Left ventricle myocardium inferior (tissue), 1 donor: ENCODE measurements at regions of chr19 and their contacts with region 1.

Region 1: DNA sequence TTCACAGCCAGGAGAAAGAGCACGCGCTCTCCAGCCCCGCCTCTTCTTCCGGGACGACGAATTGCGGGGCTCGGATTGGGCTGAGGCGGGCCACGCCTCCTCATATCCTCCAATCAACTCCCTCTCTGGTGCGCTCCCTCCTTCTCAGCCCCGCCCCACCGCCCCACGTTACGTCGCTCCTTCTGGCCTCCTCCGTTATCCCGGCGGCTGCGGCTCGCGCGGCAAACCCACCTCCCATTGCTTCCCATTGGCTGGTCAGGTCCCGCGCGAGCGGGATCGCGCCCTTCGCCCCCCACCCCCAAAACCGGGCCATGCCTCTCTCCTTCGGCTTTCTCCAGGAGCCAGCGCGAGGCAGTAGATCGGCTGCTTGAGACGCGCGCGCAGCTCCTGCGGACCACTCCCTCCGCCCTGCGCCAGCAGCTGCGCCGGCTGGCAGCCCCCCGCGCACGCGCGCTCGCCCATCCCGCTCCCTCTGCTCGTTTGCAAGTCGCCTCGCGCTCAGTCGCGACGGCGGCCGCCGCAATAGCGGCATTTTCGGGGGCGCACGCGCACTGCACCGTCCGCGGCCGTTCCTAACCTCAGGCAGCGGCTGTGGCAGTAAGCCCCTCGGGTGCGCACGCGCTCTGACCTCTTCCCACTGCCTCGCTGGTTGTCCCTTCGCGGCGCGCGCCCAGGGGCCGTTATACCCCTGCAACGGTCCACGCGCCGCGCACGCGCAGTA is 512 bp upstream of the ARHGAP35 start:
- DNase-seq: peak; percentile 99
- H3K4me3 ChIP-seq: peak overlapping the region; percentile 79
- H3K27ac ChIP-seq: peak overlapping the region; percentile 98
- H3K4me1 ChIP-seq: peaks cover 72% of the 10 kb centered on the region
- H3K27me3 ChIP-seq: no peaks in the 10 kb centered on the region
- CTCF ChIP-seq: peak; percentile 15

Region 2: DNA sequence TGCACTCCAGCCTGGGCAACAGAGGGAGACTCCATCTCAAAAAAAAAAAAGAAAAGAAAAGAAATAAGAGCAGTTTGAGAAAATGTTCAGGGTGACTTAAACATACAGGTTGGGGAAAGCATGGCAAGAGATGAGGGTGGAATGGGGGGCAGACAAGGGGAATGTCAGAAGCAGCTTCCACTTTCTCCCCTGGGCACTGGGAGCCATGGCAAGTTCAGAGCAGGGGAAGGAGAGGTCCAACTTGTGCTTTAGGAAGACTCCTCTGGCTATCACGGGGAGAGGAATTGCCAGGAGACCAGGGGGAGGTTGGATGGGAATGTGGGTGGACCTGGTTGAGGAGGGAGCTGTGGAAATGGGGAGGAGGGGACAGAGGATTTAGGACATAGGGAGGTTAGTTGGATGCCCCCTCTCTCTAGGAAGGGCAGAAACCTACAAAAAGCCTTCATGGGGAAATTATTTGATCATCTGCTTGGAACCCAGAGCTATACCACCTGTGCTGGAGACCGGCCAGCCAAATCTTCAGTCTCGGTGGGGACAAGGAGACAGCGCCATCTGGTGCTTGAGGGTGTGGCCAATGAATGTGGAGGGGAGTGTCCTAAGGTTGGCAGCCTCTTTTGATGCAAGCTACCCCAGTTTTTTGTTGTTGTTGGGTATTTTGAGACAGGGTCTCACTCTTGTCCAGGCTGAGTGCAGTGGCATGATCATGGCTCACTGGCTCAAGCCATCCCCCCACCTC is 106.7 kb before region 1 on chr19:
- intact Hi-C with region 1: no loop called
- DNase-seq: peak; percentile 41
- H3K4me3 ChIP-seq: no peak overlapping the region
- H3K27ac ChIP-seq: no peak overlapping the region
- H3K4me1 ChIP-seq: peaks cover 9% of the 10 kb centered on the region
- H3K27me3 ChIP-seq: no peaks in the 10 kb centered on the region
- CTCF ChIP-seq: peak; percentile 63

Region 3: DNA sequence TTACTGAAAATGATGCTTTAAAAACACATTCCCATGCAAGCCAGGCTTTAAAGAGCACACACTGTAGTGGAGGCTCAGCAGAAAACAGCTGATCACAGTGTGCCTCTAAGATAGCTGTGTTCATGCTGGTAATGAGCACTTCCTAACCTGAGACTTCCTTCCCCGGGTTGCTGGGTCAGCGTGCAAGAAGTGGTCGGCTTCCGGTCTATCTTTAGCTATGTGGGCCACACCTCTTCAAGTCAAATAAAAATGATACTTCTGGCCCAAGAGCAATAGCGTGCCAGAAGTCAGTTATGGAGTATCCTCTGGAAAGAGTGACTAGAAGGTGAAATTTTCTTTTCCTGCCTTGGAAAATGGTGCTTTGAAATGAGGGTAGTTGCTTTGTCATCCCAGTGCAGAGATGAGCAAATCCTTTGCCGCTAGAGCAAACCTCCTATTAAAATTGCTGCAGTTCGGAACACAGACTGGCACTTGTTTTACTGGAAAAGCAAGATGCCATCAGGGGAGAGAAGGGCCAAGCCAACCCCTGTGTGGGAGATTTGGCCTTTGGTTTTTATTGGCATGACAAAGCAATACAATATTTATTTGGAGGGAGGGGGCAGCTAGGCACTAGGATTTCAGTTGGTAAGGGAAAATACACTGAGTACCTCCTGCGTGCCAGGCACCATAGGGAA is 64.7 kb after region 1 on chr19:
- intact Hi-C with region 1: loop called (anchors 10 kb)
- DNase-seq: no peak
- H3K4me3 ChIP-seq: peak overlapping the region; percentile 2
- H3K27ac ChIP-seq: peak overlapping the region; percentile 73
- H3K4me1 ChIP-seq: peaks cover 66% of the 10 kb centered on the region
- H3K27me3 ChIP-seq: no peaks in the 10 kb centered on the region
- CTCF ChIP-seq: no peak

Region 4: DNA sequence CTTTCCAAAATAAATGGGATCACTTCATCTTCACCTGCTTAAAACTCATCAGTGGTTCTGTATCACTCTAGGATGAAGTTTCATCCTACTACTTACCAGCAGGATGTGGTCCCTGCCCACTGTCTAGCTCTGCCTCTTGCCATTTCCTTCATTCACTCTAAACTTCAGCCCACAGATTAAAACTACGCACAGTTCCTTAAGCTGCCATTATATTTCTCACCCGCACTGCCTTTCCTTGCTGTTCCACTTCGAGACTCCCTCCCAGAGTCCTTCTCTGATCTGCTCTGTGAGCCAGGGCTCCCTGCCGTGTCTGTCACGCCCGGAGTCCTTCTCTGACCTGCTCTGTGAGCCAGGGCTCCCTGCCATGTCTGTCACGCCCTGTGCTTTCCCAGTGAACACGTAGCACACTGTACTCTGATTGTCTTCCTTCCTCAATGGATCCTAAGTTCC is 107.3 kb after region 1 on chr19:
- intact Hi-C with region 1: no loop called
- DNase-seq: peak; percentile 88
- H3K4me3 ChIP-seq: peak overlapping the region; percentile 19
- H3K27ac ChIP-seq: peak overlapping the region; percentile 91
- H3K4me1 ChIP-seq: peaks cover 75% of the 10 kb centered on the region
- H3K27me3 ChIP-seq: no peaks in the 10 kb centered on the region
- CTCF ChIP-seq: no peak

Region 5: DNA sequence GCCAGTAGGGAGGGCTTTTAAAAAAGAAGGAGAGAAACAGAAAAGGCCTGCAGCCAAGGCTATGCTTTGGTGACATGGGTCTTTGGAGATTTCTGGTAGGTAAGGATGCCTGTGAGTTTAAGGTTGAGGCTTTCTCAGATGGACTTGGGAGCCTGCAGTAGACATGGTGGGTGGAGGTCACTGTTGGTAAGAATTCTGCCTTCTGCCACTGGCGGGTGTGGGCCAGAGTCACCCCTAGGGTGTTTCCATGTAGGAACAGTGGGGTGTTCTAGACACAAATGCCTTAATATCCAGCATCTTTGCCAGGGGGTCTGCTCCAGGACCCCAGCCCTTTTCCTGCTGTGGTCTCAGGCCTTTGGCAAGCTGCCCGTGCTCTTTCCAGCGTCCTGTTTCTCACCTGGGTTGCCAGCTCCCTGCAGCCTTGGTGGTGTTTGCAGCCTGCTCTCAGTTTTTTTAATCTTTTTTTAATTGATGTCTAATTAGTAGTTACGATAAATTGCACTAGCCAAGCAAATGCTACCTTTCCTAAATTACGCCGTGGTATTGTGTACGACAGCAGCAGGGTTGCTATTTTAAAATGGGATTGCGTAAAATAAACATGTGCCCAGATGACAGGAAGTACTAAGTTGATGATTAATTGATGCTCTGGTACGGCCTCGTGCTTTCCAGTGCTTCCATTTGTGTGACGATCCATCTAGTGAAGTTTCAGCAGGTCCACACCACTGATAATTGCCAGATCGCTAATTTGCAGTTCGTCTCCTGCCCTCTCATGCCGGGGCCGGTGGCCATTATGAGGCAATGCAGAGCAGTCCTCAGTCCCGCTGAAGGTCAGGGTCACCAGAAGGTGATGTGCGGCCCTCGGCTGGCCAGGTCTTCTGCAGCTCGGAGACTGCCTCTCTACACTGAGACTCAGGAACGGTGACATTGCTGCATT is 124.1 kb after region 1 on chr19:
- intact Hi-C with region 1: loop called (anchors 5 kb)
- DNase-seq: peak; percentile 61
- H3K4me3 ChIP-seq: no peak overlapping the region
- H3K27ac ChIP-seq: peak overlapping the region; percentile 91
- H3K4me1 ChIP-seq: peaks cover 88% of the 10 kb centered on the region
- H3K27me3 ChIP-seq: no peaks in the 10 kb centered on the region
- CTCF ChIP-seq: no peak

Region 6: GRCh38 chr19:46995492-46995891 is 135.2 kb after region 1 on chr19:
- intact Hi-C with region 1: no loop called
- DNase-seq: no peak
- H3K4me3 ChIP-seq: no peak overlapping the region
- H3K27ac ChIP-seq: peak overlapping the region; percentile 29
- H3K4me1 ChIP-seq: peaks cover 50% of the 10 kb centered on the region
- H3K27me3 ChIP-seq: no peaks in the 10 kb centered on the region
- CTCF ChIP-seq: no peak